Activated naive CD4-positive, alpha-beta T cell treated with anti-CD3 and anti-CD28 coated beads for 36 hours (primary cell): ENCODE measurements at regions of chr9 and their contacts with region 1.

Region 1: DNA sequence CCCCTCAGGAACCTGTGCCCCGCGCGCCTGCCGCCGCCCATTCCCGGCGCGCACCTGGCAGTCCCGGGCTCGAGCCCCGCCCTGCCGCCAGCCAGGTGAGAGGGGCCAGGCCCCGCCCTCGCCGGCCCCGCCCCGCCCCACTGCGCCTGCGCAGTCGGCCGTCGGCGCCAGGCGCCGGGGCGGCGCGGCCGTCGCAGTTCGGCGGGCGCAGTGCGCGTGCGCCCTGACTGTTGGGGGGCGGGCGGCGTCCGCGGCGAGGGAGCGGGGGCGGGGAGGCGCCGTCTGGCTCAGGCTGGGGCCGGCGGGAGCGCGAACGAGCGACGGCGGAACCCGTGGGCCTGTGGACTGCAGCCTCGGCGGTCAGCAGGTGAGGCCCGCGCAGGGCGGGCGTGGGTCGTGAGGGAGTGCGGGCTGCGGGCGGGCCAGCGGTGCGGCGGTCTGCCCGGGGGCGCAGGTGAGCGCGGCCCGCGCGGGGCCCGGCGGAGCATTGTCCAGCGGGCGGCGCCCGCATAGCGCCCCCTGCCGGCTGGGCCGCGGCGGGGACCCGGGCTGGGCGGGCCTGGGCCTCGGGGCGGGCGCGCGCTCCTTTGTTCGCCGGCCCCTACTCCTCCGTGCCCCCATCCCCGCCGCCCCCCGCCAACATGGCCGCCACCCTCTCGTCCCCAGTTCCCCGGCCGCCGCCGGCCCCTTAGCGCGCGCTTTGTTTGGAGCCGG is at the start of gene SPIN1:
- DNase-seq: peak; percentile 78
- H3K4me3 Mint-ChIP-seq: peak within 1 kb of the TSS; percentile 85
- H3K27ac Mint-ChIP-seq: peak within 1 kb of the TSS; percentile 91
- H3K4me1 Mint-ChIP-seq: peaks cover 31% of the 10 kb centered on the region
- H3K27me3 Mint-ChIP-seq: no peaks in the 10 kb centered on the region
- total RNA-seq, gene SPIN1: 20.2 to 21.4 TPM

Region 2: GRCh38 chr9:87973730-87974292 is 414.5 kb before region 1 on chr9:
- CTCF ChIA-PET with region 1: no interaction called
- intact Hi-C with region 1: loop called (anchors 10 kb)
- DNase-seq: no peak
- H3K4me3 Mint-ChIP-seq: peak overlapping the region; percentile 93
- H3K27ac Mint-ChIP-seq: no peak overlapping the region
- H3K4me1 Mint-ChIP-seq: peaks cover 19% of the 10 kb centered on the region
- H3K27me3 Mint-ChIP-seq: no peaks in the 10 kb centered on the region

Region 3: DNA sequence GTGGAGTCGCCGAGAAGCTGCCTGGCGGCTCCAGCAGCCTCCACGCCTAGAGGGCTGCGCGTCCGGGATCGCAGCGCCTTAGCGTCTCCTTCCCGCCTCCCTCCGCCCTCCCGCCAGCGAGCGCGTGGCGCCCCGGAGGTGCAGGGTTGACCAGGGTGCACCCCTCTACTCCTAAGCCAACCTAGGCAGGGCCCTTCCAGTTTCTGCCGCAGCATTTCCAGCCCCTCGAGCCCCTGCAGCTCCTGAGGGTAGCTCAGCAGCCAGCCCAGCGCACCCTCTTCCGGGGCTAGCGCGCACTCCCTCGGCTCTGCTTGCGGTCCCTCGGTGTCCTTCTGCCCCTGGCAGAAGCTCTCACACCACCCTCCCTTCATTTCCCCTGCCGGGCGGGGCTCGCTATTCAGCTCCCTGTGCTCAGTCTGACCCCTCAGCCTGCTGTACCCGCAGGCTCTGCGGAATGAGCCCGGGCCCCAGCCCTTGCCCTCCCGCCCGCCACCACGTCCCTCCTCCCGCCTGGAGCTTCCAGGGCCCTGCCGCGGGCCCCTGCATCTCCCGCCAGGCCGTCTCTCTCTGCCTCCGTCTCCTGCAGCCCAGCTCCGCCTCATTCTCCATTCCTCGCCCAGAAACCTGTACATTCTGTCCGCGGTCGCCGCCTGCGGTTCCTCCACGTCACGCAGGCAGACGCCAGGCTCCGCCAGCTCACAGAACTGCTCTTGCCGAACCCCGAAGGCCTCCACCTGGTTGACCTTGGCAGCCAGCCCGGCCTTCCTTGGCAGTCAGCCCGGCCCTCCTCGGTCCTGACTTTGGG is 311.8 kb before region 1 on chr9:
- CTCF ChIA-PET with region 1: no interaction called
- intact Hi-C with region 1: no loop called
- DNase-seq: peak; percentile 62
- H3K4me3 Mint-ChIP-seq: peak overlapping the region; percentile 76
- H3K27ac Mint-ChIP-seq: no peak overlapping the region
- H3K4me1 Mint-ChIP-seq: peaks cover 9% of the 10 kb centered on the region
- H3K27me3 Mint-ChIP-seq: peaks cover 54% of the 10 kb centered on the region

Region 4: GRCh38 chr9:88173378-88173999 is 214.8 kb before region 1 on chr9:
- CTCF ChIA-PET with region 1: interaction called, 4 read pairs
- intact Hi-C with region 1: loop called (anchors 1 kb)
- DNase-seq: peak; percentile 75
- H3K4me3 Mint-ChIP-seq: no peak overlapping the region
- H3K27ac Mint-ChIP-seq: no peak overlapping the region
- H3K4me1 Mint-ChIP-seq: peaks cover 4% of the 10 kb centered on the region
- H3K27me3 Mint-ChIP-seq: peaks cover 6% of the 10 kb centered on the region

Region 5: DNA sequence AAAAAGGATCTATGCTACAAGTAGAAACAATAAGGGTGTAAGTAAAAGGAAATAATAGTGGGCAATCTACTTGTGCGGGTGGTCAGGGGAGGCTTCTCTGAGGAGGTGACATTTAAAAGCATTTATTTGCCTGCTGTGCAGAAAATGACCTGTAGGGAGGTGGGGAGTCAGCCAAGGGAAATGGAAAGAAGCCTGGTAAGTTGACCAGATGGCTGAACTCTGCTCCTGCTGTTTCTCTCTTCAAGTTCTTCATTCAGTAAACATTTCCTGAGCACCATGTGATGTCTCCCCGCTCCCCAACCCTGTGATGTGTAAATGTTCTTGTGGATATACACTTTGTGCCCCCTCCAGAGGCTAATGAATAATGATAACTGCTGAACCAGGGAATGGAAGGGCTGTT is 10.0 kb before region 1 on chr9:
- CTCF ChIA-PET with region 1: no interaction called
- intact Hi-C with region 1: no loop called
- DNase-seq: no peak
- H3K4me3 Mint-ChIP-seq: no peak overlapping the region
- H3K27ac Mint-ChIP-seq: no peak overlapping the region
- H3K4me1 Mint-ChIP-seq: no peaks in the 10 kb centered on the region
- H3K27me3 Mint-ChIP-seq: no peaks in the 10 kb centered on the region

Region 6: DNA sequence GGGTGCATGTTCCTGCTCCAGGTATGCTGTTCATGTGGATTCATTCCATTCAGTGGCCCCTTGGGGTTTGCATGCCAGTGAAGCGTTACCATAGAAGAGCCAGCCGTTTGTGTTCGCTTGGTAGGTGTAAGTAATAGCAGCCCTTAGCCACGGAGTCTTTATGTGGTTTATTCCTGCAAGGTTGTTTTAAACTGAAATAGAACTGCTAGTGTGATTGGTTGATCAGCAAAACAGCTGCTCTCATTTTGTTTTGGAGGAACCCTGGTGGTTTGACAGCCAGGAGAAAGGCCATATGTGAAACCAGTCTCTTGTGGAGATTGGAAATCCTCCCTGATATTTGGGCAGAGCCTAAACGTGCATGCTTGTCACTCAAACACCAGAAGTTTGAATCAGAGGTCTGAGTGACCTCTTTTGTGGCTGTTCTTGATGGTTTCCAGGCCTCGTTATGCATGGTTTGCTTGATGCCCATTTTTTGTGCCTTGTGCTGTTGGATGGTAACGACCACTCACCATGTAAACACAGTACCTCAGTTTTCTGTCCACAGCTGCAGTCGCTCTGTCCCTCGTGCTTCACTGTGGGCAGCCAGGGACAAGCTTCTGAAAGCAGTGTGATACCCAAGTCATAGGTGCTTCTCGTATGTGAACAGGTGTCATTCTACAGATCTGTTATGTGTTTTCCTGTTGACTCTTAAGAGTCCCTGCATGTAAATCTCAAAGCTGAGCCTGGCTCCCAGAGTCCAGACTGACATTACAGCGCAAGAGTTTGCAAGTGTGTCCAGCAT is 88.4 kb after region 1 on chr9:
- CTCF ChIA-PET with region 1: no interaction called
- intact Hi-C with region 1: loop called (anchors 1 kb)
- DNase-seq: peak; percentile 7
- H3K4me3 Mint-ChIP-seq: no peak overlapping the region
- H3K27ac Mint-ChIP-seq: no peak overlapping the region
- H3K4me1 Mint-ChIP-seq: peaks cover 18% of the 10 kb centered on the region
- H3K27me3 Mint-ChIP-seq: no peaks in the 10 kb centered on the region

Region 7: DNA sequence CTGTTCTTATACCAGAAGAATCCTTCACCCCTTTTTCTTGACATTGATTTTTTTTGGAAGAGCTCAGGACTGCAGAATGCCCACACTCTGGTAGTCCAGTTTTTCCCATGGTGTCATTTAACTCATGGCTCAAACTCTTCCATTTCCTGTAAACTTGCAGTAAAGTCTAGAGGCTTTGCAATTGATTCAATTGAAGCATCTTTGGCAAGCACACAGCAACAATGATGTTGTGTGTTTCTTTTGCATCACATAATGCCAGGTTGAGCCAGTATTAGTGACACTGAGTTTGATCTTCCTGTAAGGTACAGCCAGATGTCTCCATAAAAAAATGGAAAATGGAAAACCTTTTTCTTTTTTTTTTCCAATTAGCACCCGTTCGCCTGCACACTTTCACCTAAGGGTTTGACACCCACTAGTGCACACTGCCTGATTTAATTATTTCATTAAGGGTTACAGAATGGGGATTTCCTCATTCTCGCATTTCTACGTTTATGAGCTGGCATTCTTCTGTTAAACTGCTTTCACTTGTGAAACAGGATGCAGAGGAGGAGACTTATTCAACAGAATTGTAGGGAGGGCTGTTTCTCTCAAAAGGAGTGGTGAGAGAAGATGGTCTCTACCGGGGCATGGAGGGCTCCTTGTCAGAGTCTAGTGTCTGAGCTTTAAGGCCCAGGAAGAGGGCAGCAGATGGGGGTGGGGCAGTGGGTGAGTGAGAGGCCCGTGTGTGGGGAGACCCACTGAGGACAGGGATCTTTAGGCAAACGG is 600.6 kb after region 1 on chr9:
- CTCF ChIA-PET with region 1: no interaction called
- intact Hi-C with region 1: loop called (anchors 5 kb)
- DNase-seq: peak; percentile 38
- H3K4me3 Mint-ChIP-seq: peak overlapping the region; percentile 8
- H3K27ac Mint-ChIP-seq: peak overlapping the region; percentile 32
- H3K4me1 Mint-ChIP-seq: peaks cover 50% of the 10 kb centered on the region
- H3K27me3 Mint-ChIP-seq: peaks cover 30% of the 10 kb centered on the region